ENCODE measurements at regions of chr14 and their contacts with region 1.

Region 1: GRCh38 chr14:31207755-31208545 is at the start of gene HECTD1:
- DNase-seq: peak; percentile 38
- H3K4me3 ChIP-seq: peak within 1 kb of the TSS; percentile 83
- H3K27me3 ChIP-seq: no peaks in the 10 kb centered on the region
- CTCF ChIP-seq: peak; percentile 17
- polyA plus RNA-seq, gene HECTD1: 70.5 and 95.7 TPM in 2 replicates

Region 2: DNA sequence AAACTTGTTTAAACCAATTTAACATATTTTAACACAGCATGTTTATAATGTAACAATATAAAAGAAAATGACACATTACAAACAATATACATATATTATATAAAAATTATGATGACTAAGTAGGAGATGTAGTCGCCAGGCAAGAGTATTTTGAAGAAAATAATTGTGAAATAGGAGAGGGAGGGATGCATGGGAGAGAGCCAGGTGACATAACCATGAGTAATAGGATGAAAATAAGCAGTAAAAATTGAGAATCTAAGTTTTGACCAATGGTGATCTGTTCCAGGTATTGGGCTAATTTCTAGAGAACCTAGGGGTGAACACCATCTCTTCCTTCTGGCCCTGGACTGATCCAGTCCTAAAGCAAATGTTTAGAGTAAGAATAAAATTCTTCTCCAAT is 964.1 kb before region 1 on chr14:
- CTCF ChIA-PET with region 1: no interaction called
- POLR2A ChIA-PET with region 1: no interaction called
- DNase-seq: peak; percentile 36
- H3K4me3 ChIP-seq: no peak overlapping the region
- H3K27me3 ChIP-seq: no peaks in the 10 kb centered on the region
- CTCF ChIP-seq: no peak

Region 3: GRCh38 chr14:31166271-31166710 is 41.7 kb before region 1 on chr14:
- CTCF ChIA-PET with region 1: interaction called, 12 read pairs
- POLR2A ChIA-PET with region 1: no interaction called
- DNase-seq: no peak
- H3K4me3 ChIP-seq: no peak overlapping the region
- H3K27me3 ChIP-seq: no peaks in the 10 kb centered on the region
- CTCF ChIP-seq: no peak

Region 4: DNA sequence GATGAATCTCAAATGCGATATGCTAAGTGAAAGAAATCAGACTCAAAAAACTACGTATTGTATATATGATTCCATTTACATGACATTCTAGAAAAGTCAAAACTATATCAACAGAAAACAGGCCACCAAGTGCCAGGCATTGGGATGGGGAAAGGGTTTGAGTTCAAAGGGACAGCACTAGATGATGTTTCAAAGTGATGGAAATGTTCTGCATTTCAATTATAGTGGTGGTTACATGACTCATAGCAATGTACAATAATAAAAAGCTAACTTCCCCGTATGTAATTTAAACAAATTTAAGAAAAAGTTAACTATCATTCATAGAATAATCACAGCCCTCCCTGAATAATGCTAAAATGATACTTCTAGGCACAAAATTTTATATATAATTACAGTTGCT is 13.9 kb before region 1 on chr14:
- CTCF ChIA-PET with region 1: interaction called, 16 read pairs
- POLR2A ChIA-PET with region 1: interaction called, 10 read pairs
- DNase-seq: no peak
- H3K4me3 ChIP-seq: no peak overlapping the region
- H3K27me3 ChIP-seq: no peaks in the 10 kb centered on the region
- CTCF ChIP-seq: no peak

Region 5: GRCh38 chr14:31263485-31264133 is 55.7 kb after region 1 on chr14:
- CTCF ChIA-PET with region 1: interaction called, 10 read pairs
- POLR2A ChIA-PET with region 1: no interaction called
- DNase-seq: peak; percentile 100
- H3K4me3 ChIP-seq: no peak overlapping the region
- H3K27me3 ChIP-seq: no peaks in the 10 kb centered on the region
- CTCF ChIP-seq: no peak

Region 6: GRCh38 chr14:31340297-31341063 is 132.5 kb after region 1 on chr14:
- CTCF ChIA-PET with region 1: interaction called, 10 read pairs
- POLR2A ChIA-PET with region 1: no interaction called
- DNase-seq: no peak
- H3K4me3 ChIP-seq: no peak overlapping the region
- H3K27me3 ChIP-seq: no peaks in the 10 kb centered on the region
- CTCF ChIP-seq: no peak